ENCODE measurements at regions of chr9 and their contacts with region 1.

Region 1: GRCh38 chr9:71768388-71769174 is at the start of gene CEMIP2:
- DNase-seq: peak; percentile 70 to 93
- H3K4me3 ChIP-seq: peak within 1 kb of the TSS; percentile 81
- H3K27ac ChIP-seq: peak within 1 kb of the TSS; percentile 68
- H3K4me1 ChIP-seq: peaks cover 49% of the 10 kb centered on the region
- H3K27me3 ChIP-seq: no peaks in the 10 kb centered on the region
- CTCF ChIP-seq: no peak
- total RNA-seq, gene CEMIP2: 60.7 and 77.0 TPM in 2 replicates

Region 2: DNA sequence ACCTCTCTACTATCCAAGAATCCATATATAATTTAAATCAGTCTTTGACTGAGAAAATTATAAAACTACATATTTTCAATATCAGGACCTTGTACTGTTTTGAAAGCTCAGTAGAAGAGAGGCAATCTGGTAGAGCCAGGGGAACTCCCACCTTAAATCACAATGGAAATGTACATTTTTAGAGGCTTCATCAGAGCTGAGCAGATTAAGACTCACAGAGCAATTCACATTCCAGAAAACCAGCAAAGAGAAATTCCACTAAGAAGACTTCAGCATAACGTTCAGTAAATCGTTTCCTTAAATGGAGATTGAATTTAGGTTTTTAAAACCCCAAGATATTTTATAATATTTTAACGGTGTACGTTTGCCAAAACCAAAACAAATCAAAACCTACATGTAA is 419.4 kb before region 1 on chr9:
- CTCF ChIA-PET with region 1: no interaction called
- POLR2A ChIA-PET with region 1: no interaction called
- intact Hi-C with region 1: loop called (anchors 5 kb)
- DNase-seq: no peak
- H3K4me3 ChIP-seq: no peak overlapping the region
- H3K27ac ChIP-seq: no peak overlapping the region
- H3K4me1 ChIP-seq: no peaks in the 10 kb centered on the region
- H3K27me3 ChIP-seq: no peaks in the 10 kb centered on the region
- CTCF ChIP-seq: no peak

Region 3: DNA sequence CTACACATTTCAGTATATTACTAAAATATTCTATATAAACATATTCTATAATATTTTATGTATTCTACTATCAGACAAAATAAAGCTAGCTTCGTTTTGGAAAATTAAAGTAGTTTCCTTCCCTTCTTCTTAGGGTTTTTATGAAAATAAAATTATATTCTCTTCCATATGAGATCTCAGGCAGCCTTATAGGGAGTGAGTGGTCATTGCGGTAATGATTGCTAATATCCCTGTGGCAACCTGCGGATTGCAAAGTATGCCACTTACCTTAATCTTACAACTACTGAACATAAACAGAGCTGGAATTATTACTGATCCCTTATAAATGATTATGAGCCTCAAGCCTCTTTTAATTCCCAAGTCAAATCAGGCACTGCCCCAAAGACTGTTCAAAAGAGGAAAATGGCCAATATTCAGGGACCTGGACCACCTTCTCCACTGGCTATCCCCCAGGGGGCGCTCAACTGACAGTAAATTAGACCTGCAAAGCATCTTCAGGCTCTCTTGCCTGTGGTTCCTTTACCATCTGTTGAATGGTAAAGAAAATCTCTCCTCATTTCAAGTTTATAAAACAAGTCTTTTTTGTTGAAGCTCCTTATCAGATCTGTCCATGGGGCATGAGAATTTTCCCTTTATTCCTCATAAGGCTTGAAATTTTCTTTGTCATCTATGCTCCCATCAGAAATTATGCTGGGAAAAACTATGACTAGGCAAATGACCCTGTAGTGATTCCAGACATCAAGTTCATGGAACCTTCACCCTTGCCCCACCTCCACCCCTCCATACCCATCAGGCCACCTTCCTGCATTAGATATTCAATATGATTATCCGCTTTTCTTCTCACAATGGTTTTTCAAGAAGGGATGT is 164.2 kb before region 1 on chr9:
- CTCF ChIA-PET with region 1: interaction called, 6 read pairs
- POLR2A ChIA-PET with region 1: no interaction called
- intact Hi-C with region 1: loop called (anchors 1 kb)
- DNase-seq: peak in 1 of 2 experiments; percentile 72
- H3K4me3 ChIP-seq: no peak overlapping the region
- H3K27ac ChIP-seq: no peak overlapping the region
- H3K4me1 ChIP-seq: no peaks in the 10 kb centered on the region
- H3K27me3 ChIP-seq: no peaks in the 10 kb centered on the region
- CTCF ChIP-seq: peak; percentile 87

Region 4: DNA sequence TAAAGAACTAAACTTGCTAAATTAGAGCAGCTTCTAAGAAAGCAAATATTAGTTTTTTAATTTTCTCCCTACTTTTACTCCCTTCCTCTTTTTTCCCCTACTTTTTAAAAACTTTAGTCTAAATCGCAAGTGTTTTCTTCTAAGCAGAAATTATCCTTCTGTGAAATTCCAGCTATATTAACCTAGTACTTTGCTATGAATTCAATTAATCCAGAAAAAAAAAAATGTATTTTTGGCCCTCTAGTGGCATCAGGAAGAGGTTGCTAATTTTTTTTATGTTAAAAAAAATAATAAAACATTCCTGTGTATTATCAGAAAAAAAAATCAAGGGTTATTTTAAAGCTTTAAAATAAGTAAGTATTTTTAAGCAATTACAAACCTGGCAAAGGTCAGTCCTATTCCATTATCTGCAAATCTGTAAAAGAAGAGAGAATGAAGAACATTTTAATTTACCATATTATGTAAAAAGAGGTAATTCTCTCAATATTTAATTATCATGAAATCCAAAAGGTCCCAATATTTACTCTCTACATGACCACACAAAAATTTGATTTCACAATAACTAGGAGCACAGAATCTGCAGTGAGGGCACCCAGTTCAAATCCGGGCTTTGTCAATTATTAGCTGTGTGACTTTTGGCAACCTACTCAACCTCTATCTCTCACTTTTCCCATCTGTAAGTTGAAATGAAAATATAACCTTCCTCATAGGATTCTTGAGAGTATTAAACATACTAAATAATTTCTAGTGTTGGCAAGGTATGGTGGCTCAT is 52.3 kb before region 1 on chr9:
- CTCF ChIA-PET with region 1: no interaction called
- POLR2A ChIA-PET with region 1: no interaction called
- intact Hi-C with region 1: loop called (anchors 2 kb)
- DNase-seq: no peak
- H3K4me3 ChIP-seq: no peak overlapping the region
- H3K27ac ChIP-seq: no peak overlapping the region
- H3K4me1 ChIP-seq: no peaks in the 10 kb centered on the region; the same call in 1 of the 2 replicates
- H3K27me3 ChIP-seq: no peaks in the 10 kb centered on the region
- CTCF ChIP-seq: peak; percentile 77

Region 5: DNA sequence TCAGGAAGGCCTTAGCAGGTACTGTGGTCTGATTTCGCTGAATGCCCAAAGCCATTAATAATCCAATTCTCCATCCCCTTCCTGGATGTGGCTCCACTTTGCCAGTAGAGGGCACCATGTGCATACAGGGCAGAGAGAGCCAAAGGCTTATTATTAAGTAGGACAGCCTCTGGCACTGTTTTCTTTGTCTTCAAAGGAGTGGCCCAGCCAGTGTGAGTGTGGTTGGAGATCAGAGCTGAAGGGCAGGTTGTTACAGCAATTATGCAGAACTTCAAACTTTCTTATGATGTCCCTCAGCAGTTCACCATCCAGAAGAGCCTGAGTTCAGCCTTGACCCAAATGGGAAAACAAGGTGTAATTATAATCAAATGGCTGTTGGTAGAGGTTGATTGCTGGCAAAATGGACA is 38.3 kb after region 1 on chr9:
- CTCF ChIA-PET with region 1: no interaction called
- POLR2A ChIA-PET with region 1: no interaction called
- intact Hi-C with region 1: no loop called
- DNase-seq: peak; percentile 66 to 79
- H3K4me3 ChIP-seq: no peak overlapping the region
- H3K27ac ChIP-seq: no peak overlapping the region
- H3K4me1 ChIP-seq: no peaks in the 10 kb centered on the region
- H3K27me3 ChIP-seq: no peaks in the 10 kb centered on the region
- CTCF ChIP-seq: peak; percentile 89

Region 6: DNA sequence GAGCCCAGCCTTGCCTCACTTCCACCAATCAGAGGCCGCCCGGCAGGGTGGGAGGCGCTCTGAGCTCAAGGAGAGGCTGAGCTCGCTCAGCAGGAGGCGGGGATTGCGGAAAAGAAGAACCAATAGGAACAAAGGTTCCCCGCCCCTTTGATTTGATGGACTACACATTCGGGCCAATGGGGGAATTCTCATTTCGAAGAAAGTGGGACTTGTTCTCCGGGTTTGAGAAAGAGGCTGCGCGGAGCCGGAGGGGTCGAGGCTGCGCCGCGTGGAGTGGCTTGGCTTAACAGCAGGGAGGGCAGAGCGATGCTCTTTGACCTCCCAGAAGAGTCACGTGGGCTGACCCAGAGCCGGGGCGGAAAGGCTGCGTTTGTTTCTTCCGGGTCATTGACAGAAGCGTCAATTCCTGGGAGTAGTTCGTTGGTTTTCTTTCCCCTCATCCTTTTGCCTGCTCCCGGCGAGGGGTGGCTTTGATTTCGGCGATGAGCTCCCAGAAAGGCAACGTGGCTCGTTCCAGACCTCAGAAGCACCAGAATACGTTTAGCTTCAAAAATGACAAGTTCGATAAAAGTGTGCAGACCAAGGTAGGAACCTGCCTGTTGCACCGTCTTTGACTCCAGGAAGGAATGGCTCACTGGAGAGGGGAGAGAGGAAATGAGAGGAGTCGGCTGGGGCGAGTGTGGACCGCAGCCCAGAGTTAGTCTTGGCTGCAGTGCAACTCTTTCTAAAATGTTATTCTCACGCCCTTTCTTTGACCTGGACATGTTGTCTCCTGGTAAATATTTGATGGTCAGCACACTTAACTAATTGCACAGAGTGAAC is 142.9 kb after region 1 on chr9 and contains the start of gene C9orf85:
- CTCF ChIA-PET with region 1: no interaction called
- POLR2A ChIA-PET with region 1: interaction called, 13 read pairs
- intact Hi-C with region 1: no loop called
- DNase-seq: peak; percentile 99
- H3K4me3 ChIP-seq: peak within 1 kb of the TSS; percentile 93
- H3K27ac ChIP-seq: peak within 1 kb of the TSS; percentile 77
- H3K4me1 ChIP-seq: peaks cover 32% of the 10 kb centered on the region
- H3K27me3 ChIP-seq: no peaks in the 10 kb centered on the region
- CTCF ChIP-seq: no peak
- total RNA-seq, gene C9orf85: 16.8 and 19.0 TPM in 2 replicates